ENCODE measurements at regions of chr5 and their contacts with region 1.

Region 1: DNA sequence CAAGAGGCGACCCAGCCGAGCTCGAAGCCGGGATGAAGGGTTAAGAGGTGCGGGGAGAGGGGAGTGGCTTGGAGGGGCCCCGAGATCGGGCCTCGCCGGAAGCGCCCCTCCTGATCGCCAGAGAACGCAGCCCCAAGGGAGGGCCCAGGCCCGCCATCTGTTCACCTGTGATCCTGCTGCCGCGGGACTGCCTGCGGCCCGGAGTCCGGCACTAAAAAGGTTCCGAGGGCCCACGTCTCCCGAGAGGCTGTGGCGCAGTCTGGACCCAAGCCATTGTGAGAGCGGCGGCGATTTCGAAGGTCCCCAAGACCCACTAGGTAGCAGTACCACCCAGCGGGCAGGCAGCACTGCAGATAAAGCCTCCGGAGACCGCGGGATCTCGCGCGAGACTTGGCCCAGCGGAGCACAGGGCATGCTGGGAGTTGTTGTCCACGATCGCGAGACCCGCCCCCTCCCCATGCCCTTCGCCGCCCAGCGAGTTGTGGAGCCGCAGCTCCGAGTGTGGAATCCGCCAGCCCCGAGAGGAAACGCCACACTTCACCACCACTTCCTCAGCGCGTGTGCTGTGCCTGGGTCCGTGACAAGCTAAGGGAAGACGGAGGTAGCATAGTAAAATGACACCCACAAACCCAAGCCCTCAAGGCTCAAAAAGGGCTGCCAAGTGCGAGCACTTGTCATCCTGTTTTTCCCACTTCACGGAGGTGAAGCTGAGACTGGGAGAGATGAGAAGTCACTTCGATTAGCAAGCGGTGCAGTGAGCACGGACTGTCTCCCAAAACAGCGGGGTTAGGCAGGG is at the start of gene KIAA1191:
- DNase-seq: peak; percentile 97
- H3K4me3 Mint-ChIP-seq: peak within 1 kb of the TSS; percentile 99
- H3K27ac Mint-ChIP-seq: peak within 1 kb of the TSS; percentile 91
- H3K4me1 Mint-ChIP-seq: peaks cover 31% of the 10 kb centered on the region
- H3K27me3 Mint-ChIP-seq: no peaks in the 10 kb centered on the region
- total RNA-seq, gene KIAA1191: 33.5 to 33.7 TPM

Region 2: DNA sequence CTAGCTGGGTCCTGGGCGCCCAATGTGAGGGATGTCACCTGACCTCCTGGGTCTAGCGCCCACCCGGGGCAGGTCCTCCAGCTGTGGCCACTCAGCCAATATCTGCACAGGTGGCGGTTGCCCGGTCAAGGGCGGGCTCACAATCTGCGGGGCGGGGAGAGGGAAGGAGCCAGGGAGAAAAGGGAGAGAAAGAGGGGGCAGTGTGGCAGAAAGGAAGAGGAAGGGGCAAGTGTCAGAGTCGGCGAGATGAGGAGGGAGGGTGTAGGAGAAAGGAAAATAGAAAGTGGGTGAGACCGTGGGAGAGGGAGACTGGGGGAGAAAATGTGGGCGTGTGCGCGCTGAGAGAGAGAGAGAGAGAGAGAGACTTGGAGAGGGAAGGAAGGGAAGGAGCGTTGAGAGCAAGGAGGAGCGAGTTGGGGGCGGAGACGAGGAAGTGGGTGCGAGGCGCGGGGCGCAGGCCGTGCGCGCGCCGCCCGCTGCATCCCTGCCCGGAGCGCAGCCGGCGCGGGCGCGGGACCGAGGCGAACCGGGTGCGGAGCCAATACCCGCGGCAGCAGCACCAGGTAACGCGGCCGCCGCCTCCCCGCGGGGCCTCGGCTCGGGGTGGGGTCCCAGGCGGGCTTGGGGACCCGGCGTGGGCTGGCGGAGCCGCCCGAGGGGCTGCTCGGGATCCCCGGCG is 703.9 kb before region 1 on chr5 and contains the start of gene HRH2:
- CTCF ChIA-PET with region 1: no interaction called
- intact Hi-C with region 1: loop called (anchors 5 kb)
- DNase-seq: peak; percentile 74
- H3K4me3 Mint-ChIP-seq: peak within 1 kb of the TSS; percentile 90
- H3K27ac Mint-ChIP-seq: peak within 1 kb of the TSS; percentile 72
- H3K4me1 Mint-ChIP-seq: peaks cover 79% of the 10 kb centered on the region
- H3K27me3 Mint-ChIP-seq: no peaks in the 10 kb centered on the region
- total RNA-seq, gene HRH2: 8.7 to 10.0 TPM

Region 3: DNA sequence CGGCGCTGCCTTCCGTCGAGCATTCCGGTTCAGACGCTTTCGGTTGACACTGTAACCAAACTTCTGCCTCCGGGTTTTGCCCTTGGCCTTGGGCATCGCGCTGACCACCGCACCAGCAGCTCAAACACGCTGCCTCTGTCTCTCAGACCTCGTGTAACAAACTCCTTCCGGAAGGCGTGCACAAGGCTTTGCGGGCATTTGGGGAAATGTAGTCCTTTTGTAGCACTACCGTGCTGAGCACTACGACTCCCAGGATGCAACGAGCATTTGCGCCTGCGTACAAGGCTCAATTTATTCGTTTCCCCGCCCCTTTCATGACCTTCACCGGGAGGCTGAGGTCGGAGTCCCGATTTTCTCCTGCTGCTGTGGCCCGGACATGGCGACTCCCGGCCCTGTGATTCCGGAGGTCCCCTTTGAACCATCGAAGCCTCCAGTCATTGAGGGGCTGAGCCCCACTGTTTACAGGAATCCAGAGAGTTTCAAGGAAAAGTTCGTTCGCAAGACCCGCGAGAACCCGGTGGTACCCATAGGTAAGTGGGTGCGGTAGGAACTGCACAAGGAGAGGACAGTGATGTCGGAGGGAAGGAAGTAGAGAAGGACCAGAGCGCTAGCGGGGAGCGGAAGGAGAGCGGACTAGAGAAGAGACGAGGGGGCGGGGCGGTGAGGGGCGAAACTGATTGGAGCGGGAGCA is 27.0 kb after region 1 on chr5 and contains the starts of genes HIGD2A and NOP16:
- CTCF ChIA-PET with region 1: interaction called, 5 read pairs
- intact Hi-C with region 1: loop called (anchors 1 kb)
- DNase-seq: peak; percentile 100
- H3K4me3 Mint-ChIP-seq: peak within 1 kb of the TSS; percentile 100
- H3K27ac Mint-ChIP-seq: peak within 1 kb of the TSS; percentile 100
- H3K4me1 Mint-ChIP-seq: peaks cover 33% of the 10 kb centered on the region
- H3K27me3 Mint-ChIP-seq: no peaks in the 10 kb centered on the region
- total RNA-seq, gene HIGD2A: 154 to 155 TPM
- total RNA-seq, gene NOP16: 42.1 to 43.1 TPM

Region 4: DNA sequence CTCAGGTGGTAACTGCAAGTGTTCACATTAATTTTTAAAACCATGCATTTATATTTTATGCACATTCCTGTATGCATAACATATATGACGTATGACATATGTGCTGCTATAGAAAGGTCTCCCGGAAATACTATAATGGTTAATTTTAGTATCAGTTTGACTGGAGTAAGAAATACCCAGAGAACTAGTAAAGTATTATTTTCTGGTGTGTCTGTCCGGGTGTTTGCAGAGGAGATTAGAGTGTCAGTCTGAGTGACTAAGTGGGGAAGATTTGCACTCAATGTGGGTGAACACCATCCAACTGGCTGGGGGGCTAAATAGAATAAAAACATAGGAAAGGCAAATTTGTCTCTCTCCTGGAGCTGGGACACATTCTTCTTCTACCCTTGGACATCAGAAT is 618.0 kb after region 1 on chr5:
- CTCF ChIA-PET with region 1: no interaction called
- intact Hi-C with region 1: no loop called
- DNase-seq: no peak
- H3K4me3 Mint-ChIP-seq: no peak overlapping the region
- H3K27ac Mint-ChIP-seq: no peak overlapping the region
- H3K4me1 Mint-ChIP-seq: peaks cover 3% of the 10 kb centered on the region
- H3K27me3 Mint-ChIP-seq: no peaks in the 10 kb centered on the region

Region 5: DNA sequence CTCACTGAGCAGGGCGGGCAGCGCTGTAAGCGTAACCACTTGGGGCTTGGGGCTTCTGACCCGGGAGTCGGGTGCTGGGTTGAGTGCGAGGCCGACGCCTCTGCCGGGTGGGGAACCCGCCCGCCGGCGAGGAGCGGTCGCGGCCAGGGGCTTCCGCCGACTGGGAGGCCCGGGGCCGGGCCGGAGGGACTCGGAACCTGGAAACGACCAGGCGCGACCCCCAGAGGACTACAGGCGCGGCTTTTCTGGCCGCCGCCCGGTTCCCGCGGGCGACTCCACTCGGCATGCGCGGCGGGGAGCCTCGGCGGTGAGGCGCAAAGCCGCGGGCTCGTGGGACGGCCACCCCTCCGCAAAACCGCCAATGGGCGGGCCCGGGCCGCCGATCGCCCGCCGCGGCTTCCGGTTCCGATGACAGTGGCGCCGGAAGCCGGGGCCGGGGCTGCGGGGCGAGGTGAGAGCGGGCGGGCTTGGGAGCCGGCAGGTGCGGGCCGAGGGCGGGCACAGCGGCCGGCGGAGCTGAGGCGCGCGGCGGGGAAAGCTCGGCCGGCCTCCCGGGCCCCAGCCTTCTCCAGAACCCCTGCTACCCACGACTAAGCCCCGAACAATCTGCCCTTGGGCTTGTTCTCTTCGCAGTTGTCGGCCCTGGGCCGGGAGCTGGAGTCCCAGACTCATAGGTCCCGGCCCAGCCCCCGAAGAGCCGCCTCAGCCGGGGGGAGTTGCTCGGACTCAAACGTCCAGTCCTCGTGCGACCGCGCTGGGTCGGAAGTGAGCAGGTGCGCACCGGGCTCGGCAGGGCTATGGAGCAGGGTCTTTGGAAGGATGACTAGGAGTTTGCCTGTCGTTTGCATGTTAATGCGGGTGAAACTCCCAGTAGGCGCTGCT is 1769.2 kb after region 1 on chr5 and contains the start of gene RMND5B:
- CTCF ChIA-PET with region 1: no interaction called
- intact Hi-C with region 1: loop called (anchors 5 kb)
- DNase-seq: peak; percentile 85
- H3K4me3 Mint-ChIP-seq: peak within 1 kb of the TSS; percentile 85
- H3K27ac Mint-ChIP-seq: peak within 1 kb of the TSS; percentile 84
- H3K4me1 Mint-ChIP-seq: peaks cover 30% of the 10 kb centered on the region
- H3K27me3 Mint-ChIP-seq: no peaks in the 10 kb centered on the region
- total RNA-seq, gene RMND5B: 26.0 to 26.7 TPM